ENCODE measurements at regions of chr17 and their contacts with region 1.

Region 1: DNA sequence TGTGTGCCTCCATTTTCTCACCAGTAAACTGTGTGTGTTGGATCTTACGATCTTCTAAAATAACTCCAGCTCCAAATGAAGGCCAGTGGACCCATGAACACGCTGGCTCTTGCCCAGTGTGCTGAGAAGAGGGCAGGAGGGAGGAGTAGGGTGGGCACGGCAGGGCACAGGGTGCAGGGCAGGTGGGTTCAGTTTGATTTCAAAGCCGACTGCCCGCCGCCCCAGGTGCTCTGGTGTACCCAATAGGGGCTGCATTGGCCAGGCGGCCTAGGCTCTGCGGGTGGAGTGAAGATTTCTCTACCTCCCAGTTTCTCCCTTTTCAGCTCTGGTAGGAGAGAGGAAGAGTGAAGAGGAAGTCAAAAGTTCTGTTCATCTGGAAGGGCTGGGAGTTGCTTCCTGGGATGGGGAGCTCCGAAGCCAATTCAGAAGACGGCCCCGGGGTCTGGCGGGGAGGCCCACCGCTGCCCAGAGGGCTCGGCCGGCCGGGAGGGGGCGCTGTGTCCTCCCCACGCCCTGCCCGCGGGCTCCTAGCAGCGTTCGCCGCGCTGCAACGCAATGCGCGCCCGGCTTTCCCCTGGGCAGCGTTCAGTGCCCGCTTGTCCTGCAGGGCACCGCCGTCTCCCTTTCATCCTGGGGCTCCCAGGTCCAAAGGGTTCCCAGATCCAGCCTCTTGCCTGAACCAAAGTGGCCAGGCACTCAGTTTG is 1.1 kb upstream of the CRHR1 start:
- DNase-seq: peak; percentile 80
- ATAC-seq: peak; percentile 58
- H3K4me3 Mint-ChIP-seq: peak overlapping the region; percentile 87
- H3K27ac Mint-ChIP-seq: no peak overlapping the region
- H3K4me1 Mint-ChIP-seq: peaks cover 43% of the 10 kb centered on the region
- H3K27me3 Mint-ChIP-seq: peaks cover 65% of the 10 kb centered on the region
- CTCF ChIP-seq: peak; percentile 83

Region 2: GRCh38 chr17:45666046-45666600 is 116.9 kb before region 1 on chr17:
- CTCF ChIA-PET with region 1: interaction called, 28 read pairs
- POLR2A ChIA-PET with region 1: no interaction called
- DNase-seq: peak; percentile 26
- ATAC-seq: peak; percentile 50
- H3K4me3 Mint-ChIP-seq: no peak overlapping the region
- H3K27ac Mint-ChIP-seq: no peak overlapping the region
- H3K4me1 Mint-ChIP-seq: no peaks in the 10 kb centered on the region
- H3K27me3 Mint-ChIP-seq: no peaks in the 10 kb centered on the region; the same call in 1 of the 2 replicates
- CTCF ChIP-seq: no peak

Region 3: DNA sequence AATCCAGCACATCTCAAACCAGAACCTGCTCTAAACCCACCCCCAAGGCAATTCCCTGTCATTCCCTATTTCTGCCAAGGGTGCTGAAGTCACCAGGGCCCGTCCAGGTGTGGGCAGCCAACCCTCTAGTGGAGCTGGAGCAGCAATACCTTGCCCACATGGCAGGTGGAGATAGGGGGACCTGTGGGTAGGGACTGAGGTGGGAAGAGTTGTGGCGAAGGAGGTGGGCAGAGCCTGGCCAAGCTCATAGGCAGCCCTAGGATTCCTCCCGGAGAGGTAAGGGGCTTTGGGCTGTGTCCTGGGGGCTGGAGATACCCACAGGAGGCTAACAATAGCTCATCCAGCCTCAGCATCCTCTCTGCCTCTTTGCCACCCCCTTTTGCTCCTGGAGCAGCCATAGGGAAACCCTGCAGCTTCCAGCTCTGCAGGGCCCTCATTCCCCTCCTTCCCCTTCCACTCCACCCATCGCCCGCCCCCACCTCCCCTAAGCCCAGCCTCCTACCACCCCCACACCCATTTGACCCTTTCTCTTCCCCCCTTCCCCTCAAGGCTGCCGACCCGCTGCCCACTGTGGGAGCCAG is 29.3 kb before region 1 on chr17:
- CTCF ChIA-PET with region 1: interaction called, 22 read pairs
- POLR2A ChIA-PET with region 1: interaction called, 3 read pairs
- DNase-seq: no peak
- ATAC-seq: no peak; the same call in 1 of the 2 replicates
- H3K4me3 Mint-ChIP-seq: no peak overlapping the region
- H3K27ac Mint-ChIP-seq: no peak overlapping the region
- H3K4me1 Mint-ChIP-seq: no peaks in the 10 kb centered on the region
- H3K27me3 Mint-ChIP-seq: peaks cover 56% of the 10 kb centered on the region
- CTCF ChIP-seq: no peak

Region 4: GRCh38 chr17:45801421-45801820 is 18.4 kb after region 1 on chr17:
- CTCF ChIA-PET with region 1: interaction called, 87 read pairs
- POLR2A ChIA-PET with region 1: no interaction called
- DNase-seq: no peak
- ATAC-seq: no peak
- H3K4me3 Mint-ChIP-seq: no peak overlapping the region
- H3K27ac Mint-ChIP-seq: no peak overlapping the region
- H3K4me1 Mint-ChIP-seq: peaks cover 8% of the 10 kb centered on the region; the same call in 1 of the 2 replicates
- H3K27me3 Mint-ChIP-seq: peaks cover 9% of the 10 kb centered on the region; the same call in 1 of the 2 replicates
- CTCF ChIP-seq: no peak

Region 5: DNA sequence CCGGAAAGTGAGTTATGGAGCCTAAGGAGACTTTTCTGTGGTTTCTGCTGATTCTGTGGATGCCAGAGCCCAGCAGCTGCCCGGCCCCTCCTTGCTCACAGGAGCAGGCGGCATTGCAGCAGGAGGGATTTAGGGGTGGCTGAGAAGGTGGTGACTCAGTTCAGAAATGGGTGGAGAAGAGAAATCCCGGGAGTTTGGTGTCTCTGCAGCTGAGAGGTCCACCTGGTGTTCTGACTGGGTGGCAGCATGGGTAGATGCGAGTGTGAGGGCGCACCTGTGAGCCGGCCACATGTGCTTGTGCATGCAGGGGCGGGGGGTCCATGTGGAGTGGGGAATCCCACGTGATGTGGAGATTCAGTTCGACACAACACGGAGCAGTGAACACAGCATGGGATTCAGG is 45.6 kb after region 1 on chr17:
- CTCF ChIA-PET with region 1: interaction called, 54 read pairs
- POLR2A ChIA-PET with region 1: no interaction called
- DNase-seq: no peak
- ATAC-seq: no peak
- H3K4me3 Mint-ChIP-seq: no peak overlapping the region
- H3K27ac Mint-ChIP-seq: no peak overlapping the region
- H3K4me1 Mint-ChIP-seq: no peaks in the 10 kb centered on the region
- H3K27me3 Mint-ChIP-seq: no peaks in the 10 kb centered on the region
- CTCF ChIP-seq: no peak